Mammary epithelial cell (primary cell): ENCODE measurements at regions of chr16 and their contacts with region 1.

Region 1: DNA sequence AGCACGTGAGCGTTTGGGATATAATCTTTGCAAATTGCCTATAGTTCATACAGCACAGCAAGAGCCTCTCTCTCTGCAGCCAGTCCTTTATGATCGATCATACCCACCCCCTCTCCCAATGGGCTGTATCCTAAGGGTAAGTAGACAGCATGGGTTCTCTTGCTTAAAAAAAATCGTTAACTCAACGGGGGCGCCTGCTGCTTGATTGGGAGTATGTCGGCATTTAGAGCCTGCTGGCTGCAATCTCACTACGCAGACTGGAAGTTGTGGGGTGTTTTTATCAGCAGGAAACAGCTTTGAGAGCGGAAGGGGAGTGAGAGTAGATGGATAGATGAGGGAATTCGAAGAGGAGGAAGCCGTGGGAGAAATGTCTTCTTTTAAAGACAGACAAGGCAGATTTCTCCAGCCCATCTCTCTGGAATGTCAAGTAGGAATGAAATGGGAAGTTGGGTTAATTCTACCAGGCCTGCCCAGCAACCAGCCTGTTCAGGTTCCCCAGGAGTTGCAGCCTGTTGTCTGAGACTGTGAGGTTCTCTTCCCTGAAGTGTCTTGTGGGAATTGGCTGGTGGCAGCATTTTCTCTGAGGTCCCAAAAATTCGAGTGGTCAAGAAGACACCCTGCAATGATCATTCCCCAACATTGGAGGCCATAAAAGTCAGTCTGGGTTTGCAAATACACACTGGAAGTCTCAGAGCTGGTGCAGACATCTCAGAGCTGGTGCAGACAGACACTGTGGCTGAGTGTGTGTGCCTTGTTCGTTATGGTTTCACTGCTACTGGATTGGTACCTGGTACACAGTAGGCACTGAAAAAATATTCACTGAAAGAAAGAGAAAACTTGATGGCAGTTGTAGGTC is 65.6 kb downstream of the PRKCB start:
- DNase-seq: no peak
- H3K4me3 ChIP-seq: no peak overlapping the region
- H3K27ac ChIP-seq: no peak overlapping the region
- H3K4me1 ChIP-seq: peaks cover 15% of the 10 kb centered on the region
- H3K27me3 ChIP-seq: no peaks in the 10 kb centered on the region
- CTCF ChIP-seq: no peak

Region 2: DNA sequence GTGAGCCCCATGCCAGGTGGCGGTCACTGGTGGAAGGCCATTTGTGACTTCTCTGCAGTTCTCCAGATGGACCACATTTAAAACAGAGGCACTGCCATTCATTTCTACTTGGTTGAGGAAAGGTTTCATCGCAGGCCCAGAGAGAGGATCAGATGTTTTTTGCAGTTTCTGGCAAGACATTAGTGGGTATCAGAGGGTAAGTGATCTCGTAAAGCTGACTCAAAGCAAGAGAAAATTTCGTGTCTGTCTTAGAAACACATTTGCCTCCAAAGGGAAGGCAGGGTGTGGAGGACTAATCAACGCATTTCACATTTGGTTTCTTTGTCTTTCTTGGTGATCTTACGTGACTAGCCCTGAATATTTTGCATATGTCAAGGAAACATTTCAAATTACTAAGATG is 16.2 kb after region 1 on chr16:
- CTCF ChIA-PET with region 1: no interaction called
- dilution Hi-C with region 1: no loop called
- in situ Hi-C with region 1: no loop called
- intact Hi-C with region 1: no loop called
- DNase-seq: no peak
- H3K4me3 ChIP-seq: no peak overlapping the region
- H3K27ac ChIP-seq: no peak overlapping the region
- H3K4me1 ChIP-seq: no peaks in the 10 kb centered on the region
- H3K27me3 ChIP-seq: no peaks in the 10 kb centered on the region
- CTCF ChIP-seq: no peak

Region 3: GRCh38 chr16:23999663-24000062 is 98.3 kb after region 1 on chr16:
- CTCF ChIA-PET with region 1: no interaction called
- dilution Hi-C with region 1: no loop called
- in situ Hi-C with region 1: no loop called
- intact Hi-C with region 1: loop called (anchors 5 kb)
- DNase-seq: peak; percentile 49
- H3K4me3 ChIP-seq: no peak overlapping the region
- H3K27ac ChIP-seq: no peak overlapping the region
- H3K4me1 ChIP-seq: peaks cover 23% of the 10 kb centered on the region
- H3K27me3 ChIP-seq: no peaks in the 10 kb centered on the region
- CTCF ChIP-seq: no peak